Activated naive CD4-positive, alpha-beta T cell treated with anti-CD3 and anti-CD28 coated beads for 36 hours (primary cell): ENCODE measurements at regions of chr11 and their contacts with region 1.

Region 1: GRCh38 chr11:31817054-31817620 is 6.0 kb upstream of the PAX6 start:
- DNase-seq: peak; percentile 22
- H3K4me3 Mint-ChIP-seq: peak overlapping the region; percentile 60
- H3K27ac Mint-ChIP-seq: no peak overlapping the region
- H3K4me1 Mint-ChIP-seq: peaks cover 37% of the 10 kb centered on the region
- H3K27me3 Mint-ChIP-seq: peaks cover 71% of the 10 kb centered on the region

Region 2: DNA sequence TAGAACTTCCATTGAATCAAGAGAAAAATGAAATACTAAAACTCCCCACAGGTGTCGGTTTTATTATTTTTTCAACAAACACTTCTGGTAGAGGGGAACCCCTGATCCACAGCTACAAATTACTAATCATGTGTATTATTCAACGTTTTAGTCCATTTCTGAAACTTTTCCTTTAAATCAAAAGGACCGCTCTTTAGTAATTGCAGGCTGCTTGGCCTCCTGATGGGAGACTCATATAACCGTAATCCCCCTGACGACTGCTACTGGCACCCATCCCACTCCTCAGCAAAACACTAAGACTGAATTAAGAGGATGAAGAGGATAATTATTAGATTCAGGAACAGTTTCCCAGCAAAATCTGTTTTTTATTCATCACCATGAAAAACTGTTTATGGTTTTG is 52.4 kb before region 1 on chr11:
- CTCF ChIA-PET with region 1: no interaction called
- intact Hi-C with region 1: no loop called
- DNase-seq: no peak
- H3K4me3 Mint-ChIP-seq: no peak overlapping the region
- H3K27ac Mint-ChIP-seq: no peak overlapping the region
- H3K4me1 Mint-ChIP-seq: no peaks in the 10 kb centered on the region
- H3K27me3 Mint-ChIP-seq: no peaks in the 10 kb centered on the region

Region 3: DNA sequence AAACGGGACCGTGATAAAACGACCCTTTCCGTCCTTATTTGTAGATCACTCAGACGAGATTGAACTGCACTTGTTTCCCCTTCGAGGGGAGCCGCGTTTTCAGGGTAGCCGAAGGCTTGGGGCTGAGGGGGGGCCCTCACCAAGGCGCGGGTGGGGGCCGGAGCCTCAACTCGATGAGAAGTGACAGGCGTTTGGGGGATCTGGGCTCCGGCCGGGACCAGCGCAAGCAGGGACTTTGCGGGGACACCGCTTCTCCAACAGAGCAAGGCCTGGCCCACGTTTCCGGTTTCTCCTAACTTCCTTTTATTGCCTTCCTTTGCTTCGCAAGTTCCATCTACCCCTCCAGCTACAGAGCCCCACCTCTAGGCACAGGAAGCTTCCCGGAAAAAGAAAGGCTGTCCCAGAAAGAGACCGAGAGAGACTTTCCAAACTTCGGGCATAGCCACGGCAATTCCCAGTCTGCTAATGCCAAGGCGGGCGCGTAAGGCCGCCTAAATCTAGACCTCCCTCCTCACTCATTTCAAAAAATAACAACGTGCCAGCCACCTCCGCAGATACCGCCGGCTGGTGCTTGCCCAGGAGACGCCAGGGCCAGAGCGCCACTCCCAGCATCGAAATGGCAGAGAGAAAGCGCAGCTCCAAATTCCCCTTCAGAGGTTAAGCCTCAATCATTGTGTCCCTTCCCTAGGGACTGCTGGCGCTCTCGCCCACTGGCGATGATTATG is 12.7 kb before region 1 on chr11:
- CTCF ChIA-PET with region 1: interaction called, 3 read pairs
- intact Hi-C with region 1: loop called (anchors 1 kb)
- DNase-seq: peak; percentile 17
- H3K4me3 Mint-ChIP-seq: peak overlapping the region; percentile 63
- H3K27ac Mint-ChIP-seq: no peak overlapping the region
- H3K4me1 Mint-ChIP-seq: peaks cover 45% of the 10 kb centered on the region
- H3K27me3 Mint-ChIP-seq: peaks cover 87% of the 10 kb centered on the region

Region 4: GRCh38 chr11:32435511-32435941 is 618.4 kb after region 1 on chr11 and contains the start of gene WT1:
- CTCF ChIA-PET with region 1: no interaction called
- intact Hi-C with region 1: loop called (anchors 5 kb)
- DNase-seq: no peak
- H3K4me3 Mint-ChIP-seq: peak within 1 kb of the TSS; percentile 61
- H3K27ac Mint-ChIP-seq: no peak within 1 kb of the TSS
- H3K4me1 Mint-ChIP-seq: peaks cover 43% of the 10 kb centered on the region
- H3K27me3 Mint-ChIP-seq: peaks cover 75% of the 10 kb centered on the region
- total RNA-seq, gene WT1: not detected